ENCODE measurements at regions of chrX and their contacts with region 1.

Region 1: GRCh38 chrX:38327007-38327774 is at the start of gene RPGR:
- DNase-seq: peak; percentile 90
- H3K4me3 Mint-ChIP-seq: peak within 1 kb of the TSS; percentile 91
- H3K27ac Mint-ChIP-seq: peak within 1 kb of the TSS; percentile 99
- H3K4me1 Mint-ChIP-seq: no peaks in the 10 kb centered on the region
- H3K27me3 Mint-ChIP-seq: peaks cover 36% of the 10 kb centered on the region
- CTCF ChIP-seq: peak; percentile 50
- total RNA-seq, gene RPGR: 18.9 and 23.8 TPM in 2 replicates

Region 2: GRCh38 chrX:38192007-38192810 is 135.0 kb before region 1 on chrX:
- CTCF ChIA-PET with region 1: interaction called, 48 read pairs
- POLR2A ChIA-PET with region 1: interaction called, 10 read pairs
- intact Hi-C with region 1: loop called (anchors 1 kb)
- DNase-seq: peak; percentile 46
- H3K4me3 Mint-ChIP-seq: no peak overlapping the region
- H3K27ac Mint-ChIP-seq: no peak overlapping the region
- H3K4me1 Mint-ChIP-seq: no peaks in the 10 kb centered on the region
- H3K27me3 Mint-ChIP-seq: peaks cover 68% of the 10 kb centered on the region
- CTCF ChIP-seq: peak; percentile 63

Region 3: DNA sequence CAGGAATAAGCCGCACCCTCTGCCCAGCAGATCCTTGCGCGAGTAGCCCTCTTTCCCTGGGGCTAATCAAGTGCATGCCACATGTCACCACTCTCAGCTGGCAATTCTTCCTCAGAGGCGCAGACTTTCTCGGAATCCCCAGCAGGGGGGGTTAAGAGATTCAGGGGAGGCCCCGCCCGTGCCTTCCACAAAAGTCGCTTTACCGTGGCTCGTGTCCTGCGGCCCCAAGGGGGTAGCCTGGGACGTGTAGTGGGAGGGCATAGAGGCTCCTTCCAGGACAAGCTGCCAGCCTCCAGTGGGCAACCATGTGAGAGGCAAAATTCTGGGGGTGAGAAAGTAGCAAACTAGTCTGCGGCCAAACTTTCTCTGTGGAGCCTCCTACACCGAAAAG is 107.2 kb before region 1 on chrX:
- CTCF ChIA-PET with region 1: interaction called, 18 read pairs
- POLR2A ChIA-PET with region 1: interaction called, 9 read pairs
- intact Hi-C with region 1: loop called (anchors 1 kb)
- DNase-seq: peak; percentile 62
- H3K4me3 Mint-ChIP-seq: peak overlapping the region; percentile 69
- H3K27ac Mint-ChIP-seq: no peak overlapping the region
- H3K4me1 Mint-ChIP-seq: no peaks in the 10 kb centered on the region
- H3K27me3 Mint-ChIP-seq: peaks cover 31% of the 10 kb centered on the region
- CTCF ChIP-seq: peak; percentile 30

Region 4: GRCh38 chrX:38260231-38260630 is 67.0 kb before region 1 on chrX:
- CTCF ChIA-PET with region 1: interaction called, 15 read pairs
- POLR2A ChIA-PET with region 1: interaction called, 9 read pairs
- intact Hi-C with region 1: loop called (anchors 1 kb)
- DNase-seq: peak; percentile 56
- H3K4me3 Mint-ChIP-seq: no peak overlapping the region
- H3K27ac Mint-ChIP-seq: peak overlapping the region; percentile 41
- H3K4me1 Mint-ChIP-seq: no peaks in the 10 kb centered on the region
- H3K27me3 Mint-ChIP-seq: peaks cover 50% of the 10 kb centered on the region
- CTCF ChIP-seq: peak; percentile 43

Region 5: GRCh38 chrX:38275615-38276014 is 51.6 kb before region 1 on chrX:
- CTCF ChIA-PET with region 1: interaction called, 20 read pairs
- POLR2A ChIA-PET with region 1: interaction called, 14 read pairs
- intact Hi-C with region 1: loop called (anchors 2 kb)
- DNase-seq: peak; percentile 82
- H3K4me3 Mint-ChIP-seq: no peak overlapping the region
- H3K27ac Mint-ChIP-seq: peak overlapping the region; percentile 13
- H3K4me1 Mint-ChIP-seq: peaks cover 21% of the 10 kb centered on the region
- H3K27me3 Mint-ChIP-seq: peaks cover 17% of the 10 kb centered on the region
- CTCF ChIP-seq: no peak

Region 6: DNA sequence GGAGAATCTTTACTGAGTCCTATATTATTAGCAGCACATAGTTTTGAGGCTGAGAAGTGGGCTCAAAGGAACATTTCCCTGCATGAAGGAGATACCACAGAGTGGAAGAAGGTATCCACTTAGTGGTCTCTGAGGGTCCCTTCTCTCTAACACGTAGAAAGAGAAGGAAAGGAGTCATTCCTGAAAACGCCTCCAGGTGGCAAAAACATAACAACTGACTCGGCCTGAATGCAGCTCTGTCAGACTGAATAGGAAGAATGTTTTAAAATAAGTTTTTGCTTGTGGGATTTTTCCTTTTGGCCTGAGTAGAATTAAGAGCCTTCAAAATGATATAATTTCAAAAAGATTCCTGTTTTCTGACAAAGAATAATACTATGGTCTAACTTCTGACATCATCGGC is 23.2 kb before region 1 on chrX:
- CTCF ChIA-PET with region 1: interaction called, 42 read pairs
- POLR2A ChIA-PET with region 1: interaction called, 123 read pairs
- intact Hi-C with region 1: loop called (anchors 2 kb)
- DNase-seq: peak; percentile 47
- H3K4me3 Mint-ChIP-seq: no peak overlapping the region
- H3K27ac Mint-ChIP-seq: peak overlapping the region; percentile 39
- H3K4me1 Mint-ChIP-seq: peaks cover 6% of the 10 kb centered on the region
- H3K27me3 Mint-ChIP-seq: peaks cover 46% of the 10 kb centered on the region
- CTCF ChIP-seq: peak; percentile 30

Region 7: DNA sequence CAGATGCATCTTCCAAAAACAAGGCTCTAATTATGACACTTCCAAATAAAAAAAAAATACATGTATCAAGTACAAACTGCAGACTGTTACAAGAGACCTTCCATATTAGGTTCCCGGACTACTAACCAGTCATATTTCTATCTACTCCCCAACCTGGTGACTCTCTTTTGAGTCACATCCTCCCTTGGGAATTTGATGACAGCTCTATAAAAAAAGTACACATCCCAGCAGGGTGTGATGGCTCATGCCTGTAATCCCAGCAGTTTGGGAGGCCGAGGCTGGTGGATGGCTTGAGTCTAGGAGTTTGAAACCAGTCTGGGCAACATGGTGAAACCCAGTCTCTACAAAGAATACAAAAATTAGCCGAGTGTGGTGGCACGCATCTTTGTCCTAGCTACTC is 14.8 kb before region 1 on chrX:
- CTCF ChIA-PET with region 1: interaction called, 11 read pairs
- POLR2A ChIA-PET with region 1: interaction called, 123 read pairs
- intact Hi-C with region 1: loop called (anchors 2 kb)
- DNase-seq: peak; percentile 84
- H3K4me3 Mint-ChIP-seq: no peak overlapping the region
- H3K27ac Mint-ChIP-seq: no peak overlapping the region
- H3K4me1 Mint-ChIP-seq: peaks cover 19% of the 10 kb centered on the region
- H3K27me3 Mint-ChIP-seq: peaks cover 29% of the 10 kb centered on the region
- CTCF ChIP-seq: no peak

Measured in MCF 10A (cell line).